CD4-positive, alpha-beta T cell (primary cell): ENCODE measurements at regions of chr5 and their contacts with region 1.

Region 1: DNA sequence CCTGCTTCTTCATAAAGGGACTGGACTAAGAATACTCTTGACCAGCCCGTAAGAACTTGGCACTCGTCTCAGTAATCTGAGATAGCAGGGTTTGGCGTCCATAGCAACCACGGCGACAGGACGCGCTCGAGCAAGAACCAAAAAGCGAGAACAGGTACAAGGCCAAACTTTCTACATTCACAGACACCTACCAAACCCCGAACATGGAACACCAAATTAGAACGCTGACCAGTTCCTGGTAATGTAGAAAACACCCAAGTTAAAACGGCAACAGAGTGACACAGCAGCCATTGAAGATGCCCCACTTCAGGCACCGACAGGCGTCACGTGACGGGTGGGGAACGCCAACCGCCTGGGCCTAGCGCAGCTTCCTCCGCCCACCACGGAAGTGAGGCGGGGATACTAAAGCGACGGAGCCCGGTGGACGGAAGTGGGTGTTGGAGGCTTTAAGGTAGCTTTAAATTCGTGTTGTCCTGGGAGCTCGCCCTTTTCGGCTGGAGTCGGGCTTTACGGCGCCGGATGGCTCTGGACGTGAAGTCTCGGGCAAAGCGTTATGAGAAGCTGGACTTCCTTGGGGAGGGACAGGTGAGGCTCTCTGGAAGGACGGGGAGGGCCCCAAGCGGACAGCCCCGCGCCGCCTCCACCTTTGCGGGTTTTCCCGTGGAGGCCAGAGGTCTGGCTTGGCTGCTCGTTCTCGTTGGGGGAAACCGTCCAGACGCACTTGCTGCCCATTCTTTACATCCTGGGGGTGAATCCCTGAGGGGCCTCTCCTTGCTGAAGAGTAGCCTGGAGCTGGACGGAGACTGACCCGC is at the start of gene CDK7:
- DNase-seq: peak; percentile 80 to 96 (median 89)
- ATAC-seq: peak; percentile 99
- H3K4me3 ChIP-seq: peak within 1 kb of the TSS; percentile 90
- H3K4me3 Mint-ChIP-seq: peak within 1 kb of the TSS; percentile 95
- H3K27ac ChIP-seq: peak within 1 kb of the TSS; percentile 74 to 75
- H3K27ac Mint-ChIP-seq: peak within 1 kb of the TSS; percentile 86
- H3K4me1 ChIP-seq: peaks cover 23% of the 10 kb centered on the region
- H3K4me1 Mint-ChIP-seq: peaks cover 40% of the 10 kb centered on the region
- H3K27me3 ChIP-seq: no peaks in the 10 kb centered on the region
- H3K27me3 Mint-ChIP-seq: no peaks in the 10 kb centered on the region
- CTCF ChIP-seq: no peak
- total RNA-seq, gene CDK7: 30.1 to 33.0 TPM

Region 2: DNA sequence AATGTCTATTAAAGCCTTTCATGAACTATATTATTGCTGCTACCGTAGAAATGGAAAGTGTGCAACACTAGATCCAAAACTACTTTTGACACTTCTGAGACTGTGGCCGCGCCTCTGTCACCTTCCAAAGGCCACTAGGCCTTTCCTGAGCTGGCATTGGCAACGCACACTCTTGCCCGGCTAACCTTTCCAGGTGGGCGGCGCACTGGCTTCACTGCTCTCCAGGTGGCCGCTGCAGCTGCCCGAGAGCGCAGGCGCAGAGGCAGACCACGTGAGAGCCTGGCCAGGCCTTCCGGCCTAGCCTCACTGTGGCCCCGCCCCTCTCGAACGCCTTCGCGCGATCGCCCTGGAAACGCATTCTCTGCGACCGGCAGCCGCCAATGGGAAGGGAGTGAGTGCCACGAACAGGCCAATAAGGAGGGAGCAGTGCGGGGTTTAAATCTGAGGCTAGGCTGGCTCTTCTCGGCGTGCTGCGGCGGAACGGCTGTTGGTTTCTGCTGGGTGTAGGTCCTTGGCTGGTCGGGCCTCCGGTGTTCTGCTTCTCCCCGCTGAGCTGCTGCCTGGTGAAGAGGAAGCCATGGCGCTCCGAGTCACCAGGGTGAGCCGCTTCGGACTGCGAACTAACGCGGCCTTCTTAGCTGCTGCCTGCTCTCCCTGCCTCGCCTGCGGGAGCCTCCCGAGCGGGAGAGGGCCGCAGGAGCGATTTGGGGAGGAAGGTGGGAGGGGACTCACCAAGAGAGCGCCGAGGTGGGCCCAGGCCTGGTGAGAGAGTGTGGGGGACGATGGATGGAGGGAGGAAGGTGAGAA is 67.8 kb before region 1 on chr5 and contains the start of gene CCNB1:
- CTCF ChIA-PET with region 1: no interaction called
- POLR2A ChIA-PET with region 1: interaction called, 9 read pairs
- intact Hi-C with region 1: loop called in 1 of 2 experiments (anchors 2 kb)
- DNase-seq: peak; percentile 92 to 98 (median 96)
- ATAC-seq: peak; percentile 100
- H3K4me3 ChIP-seq: peak within 1 kb of the TSS; percentile 80
- H3K4me3 Mint-ChIP-seq: peak within 1 kb of the TSS; percentile 93
- H3K27ac ChIP-seq: peak within 1 kb of the TSS in 1 of 2 donors; percentile 46
- H3K27ac Mint-ChIP-seq: peak within 1 kb of the TSS; percentile 73
- H3K4me1 ChIP-seq: peaks cover 16% of the 10 kb centered on the region
- H3K4me1 Mint-ChIP-seq: peaks cover 23% of the 10 kb centered on the region
- H3K27me3 ChIP-seq: no peaks in the 10 kb centered on the region
- H3K27me3 Mint-ChIP-seq: no peaks in the 10 kb centered on the region
- CTCF ChIP-seq: no peak
- total RNA-seq, gene CCNB1: 1.4 to 1.5 TPM

Region 3: GRCh38 chr5:69217548-69218526 is 16.8 kb before region 1 on chr5:
- CTCF ChIA-PET with region 1: interaction called, 6 read pairs
- POLR2A ChIA-PET with region 1: interaction called, 24 read pairs
- intact Hi-C with region 1: loop called (anchors 1 kb)
- DNase-seq: peak; percentile 85 to 99 (median 94)
- ATAC-seq: peak; percentile 91
- H3K4me3 ChIP-seq: peak overlapping the region; percentile 89
- H3K4me3 Mint-ChIP-seq: peak overlapping the region; percentile 95
- H3K27ac ChIP-seq: peak overlapping the region; percentile 88 to 93
- H3K27ac Mint-ChIP-seq: peak overlapping the region; percentile 98
- H3K4me1 ChIP-seq: peaks cover 5% of the 10 kb centered on the region
- H3K4me1 Mint-ChIP-seq: peaks cover 36% of the 10 kb centered on the region
- H3K27me3 ChIP-seq: no peaks in the 10 kb centered on the region
- H3K27me3 Mint-ChIP-seq: no peaks in the 10 kb centered on the region
- CTCF ChIP-seq: no peak

Region 4: DNA sequence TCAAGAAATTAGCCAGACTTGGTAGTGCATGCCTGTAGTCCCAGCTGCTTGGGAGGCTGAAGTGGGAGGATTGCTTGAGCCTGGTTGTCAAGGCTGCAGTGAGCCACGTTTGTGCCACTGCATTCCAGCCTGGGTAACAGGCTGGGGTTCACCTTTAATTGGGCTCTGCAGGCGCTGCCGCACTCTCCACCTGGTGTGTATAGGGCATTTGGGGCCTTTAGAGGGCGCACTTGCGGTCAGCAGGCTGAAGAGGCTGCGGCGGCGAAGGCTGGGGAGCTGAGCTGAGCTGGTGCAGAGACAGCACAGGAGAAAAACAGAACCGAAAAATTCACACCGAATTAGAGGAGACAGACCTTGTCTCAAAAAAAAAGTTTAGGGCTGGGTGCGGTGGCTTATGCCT is 31.3 kb after region 1 on chr5:
- CTCF ChIA-PET with region 1: no interaction called
- POLR2A ChIA-PET with region 1: no interaction called
- intact Hi-C with region 1: no loop called
- DNase-seq: peak in 3 of 14 experiments; percentile 8 to 29 (median 11)
- ATAC-seq: no peak
- H3K4me3 ChIP-seq: no peak overlapping the region
- H3K4me3 Mint-ChIP-seq: no peak overlapping the region
- H3K27ac ChIP-seq: no peak overlapping the region
- H3K27ac Mint-ChIP-seq: no peak overlapping the region
- H3K4me1 ChIP-seq: no peaks in the 10 kb centered on the region
- H3K4me1 Mint-ChIP-seq: peaks cover under 1% of the 10 kb centered on the region
- H3K27me3 ChIP-seq: no peaks in the 10 kb centered on the region
- H3K27me3 Mint-ChIP-seq: no peaks in the 10 kb centered on the region
- CTCF ChIP-seq: no peak